ENCODE measurements at regions of chr3 and their contacts with region 1.

Region 1: GRCh38 chr3:57826245-57826951 is 70.3 kb downstream of the SLMAP start:
- DNase-seq: no peak
- ATAC-seq: no peak
- H3K4me3 ChIP-seq: no peak overlapping the region
- H3K27ac ChIP-seq: no peak overlapping the region
- H3K4me1 ChIP-seq: peaks cover 0 to 58% (median 21%) of the 10 kb centered on the region in 12 donors
- H3K27me3 ChIP-seq: no peaks in the 10 kb centered on the region
- CTCF ChIP-seq: peak in 7 of 12 donors; percentile 19 to 54 (median 42)
- POLR2A ChIP-seq: no peak

Region 2: GRCh38 chr3:57397175-57398026 is 429.0 kb before region 1 on chr3:
- intact Hi-C with region 1: loop called in 1 of 10 experiments (anchors 10 kb)
- DNase-seq: peak in 3 of 5 donors; percentile 18 to 29 (median 23)
- ATAC-seq: peak in 3 of 4 donors; percentile 66 to 85 (median 75)
- H3K4me3 ChIP-seq: no peak overlapping the region
- H3K27ac ChIP-seq: no peak overlapping the region
- H3K4me1 ChIP-seq: peaks cover 0 to 4% (median 0%) of the 10 kb centered on the region in 12 donors
- H3K27me3 ChIP-seq: no peaks in the 10 kb centered on the region
- CTCF ChIP-seq: peak; percentile 58 to 79 (median 73)
- POLR2A ChIP-seq: no peak

Region 3: GRCh38 chr3:57646723-57647122 is 179.7 kb before region 1 on chr3:
- intact Hi-C with region 1: loop called in 5 of 10 experiments (anchors 5 to 10 kb)
- DNase-seq: peak in 2 of 5 donors; percentile 22 to 35
- ATAC-seq: peak; percentile 86 to 92 (median 89)
- H3K4me3 ChIP-seq: no peak overlapping the region
- H3K27ac ChIP-seq: peak overlapping the region in 2 of 12 donors; percentile 25 to 34
- H3K4me1 ChIP-seq: peaks cover 0 to 12% (median 6%) of the 10 kb centered on the region in 12 donors
- H3K27me3 ChIP-seq: no peaks in the 10 kb centered on the region
- CTCF ChIP-seq: peak in 8 of 12 donors; percentile 24 to 60 (median 41)
- POLR2A ChIP-seq: no peak

Region 4: DNA sequence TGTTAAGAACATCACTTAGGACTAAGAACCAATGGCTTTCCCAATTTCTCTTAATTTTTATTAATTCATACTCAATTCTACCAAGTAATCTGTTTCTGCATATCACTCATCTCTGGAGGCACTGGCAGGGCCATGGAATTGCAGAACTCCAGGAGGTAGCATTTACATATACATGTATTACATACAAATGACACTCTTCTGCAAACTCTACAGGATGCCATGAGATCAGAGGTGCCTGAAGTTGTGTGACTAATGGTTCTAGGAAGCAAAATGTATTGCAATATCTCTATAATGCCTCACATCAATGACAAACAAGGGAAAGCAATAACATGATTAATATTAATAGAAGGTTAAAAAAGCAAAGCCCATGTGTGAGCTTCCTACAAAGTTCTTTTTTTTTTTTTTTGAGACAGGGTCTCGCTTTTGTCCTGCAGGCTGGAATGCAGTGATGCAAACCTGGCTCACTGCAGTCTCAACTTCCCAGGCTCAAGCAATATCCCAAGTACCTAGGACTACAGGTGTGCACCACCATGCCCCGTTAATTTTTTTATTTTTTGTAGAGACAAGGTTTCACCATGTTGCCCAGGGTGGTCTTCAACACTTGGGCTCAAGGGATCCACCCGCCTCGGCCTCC is 166.5 kb before region 1 on chr3:
- intact Hi-C with region 1: loop called in 1 of 10 experiments (anchors 10 kb)
- DNase-seq: no peak
- ATAC-seq: no peak
- H3K4me3 ChIP-seq: no peak overlapping the region
- H3K27ac ChIP-seq: peak overlapping the region in 7 of 12 donors; percentile 25 to 63 (median 46)
- H3K4me1 ChIP-seq: peaks cover 0 to 19% (median 15%) of the 10 kb centered on the region in 12 donors
- H3K27me3 ChIP-seq: no peaks in the 10 kb centered on the region
- CTCF ChIP-seq: no peak
- POLR2A ChIP-seq: no peak

Region 5: GRCh38 chr3:57682284-57682683 is 144.1 kb before region 1 on chr3:
- intact Hi-C with region 1: loop called in 2 of 10 experiments (anchors 10 kb)
- DNase-seq: no peak
- ATAC-seq: no peak
- H3K4me3 ChIP-seq: no peak overlapping the region
- H3K27ac ChIP-seq: no peak overlapping the region
- H3K4me1 ChIP-seq: peaks cover 0 to 45% (median 26%) of the 10 kb centered on the region in 12 donors
- H3K27me3 ChIP-seq: no peaks in the 10 kb centered on the region
- CTCF ChIP-seq: no peak
- POLR2A ChIP-seq: no peak

Region 6: GRCh38 chr3:57692259-57693147 is 133.9 kb before region 1 on chr3 and contains the start of gene DENND6A:
- intact Hi-C with region 1: loop called in 3 of 10 experiments (anchors 10 kb)
- DNase-seq: peak; percentile 88 to 99 (median 91)
- ATAC-seq: peak; percentile 91 to 97 (median 96)
- H3K4me3 ChIP-seq: peak within 1 kb of the TSS; percentile 50 to 97 (median 87)
- H3K27ac ChIP-seq: peak within 1 kb of the TSS; percentile 85 to 100 (median 99)
- H3K4me1 ChIP-seq: peaks cover 0 to 53% (median 33%) of the 10 kb centered on the region in 12 donors
- H3K27me3 ChIP-seq: no peaks in the 10 kb centered on the region
- CTCF ChIP-seq: peak in 2 of 12 donors; percentile 6 to 19
- POLR2A ChIP-seq: peak; percentile 70 to 95
- total RNA-seq, gene DENND6A: 12.3 to 27.9 (median 18.6) TPM

Region 7: DNA sequence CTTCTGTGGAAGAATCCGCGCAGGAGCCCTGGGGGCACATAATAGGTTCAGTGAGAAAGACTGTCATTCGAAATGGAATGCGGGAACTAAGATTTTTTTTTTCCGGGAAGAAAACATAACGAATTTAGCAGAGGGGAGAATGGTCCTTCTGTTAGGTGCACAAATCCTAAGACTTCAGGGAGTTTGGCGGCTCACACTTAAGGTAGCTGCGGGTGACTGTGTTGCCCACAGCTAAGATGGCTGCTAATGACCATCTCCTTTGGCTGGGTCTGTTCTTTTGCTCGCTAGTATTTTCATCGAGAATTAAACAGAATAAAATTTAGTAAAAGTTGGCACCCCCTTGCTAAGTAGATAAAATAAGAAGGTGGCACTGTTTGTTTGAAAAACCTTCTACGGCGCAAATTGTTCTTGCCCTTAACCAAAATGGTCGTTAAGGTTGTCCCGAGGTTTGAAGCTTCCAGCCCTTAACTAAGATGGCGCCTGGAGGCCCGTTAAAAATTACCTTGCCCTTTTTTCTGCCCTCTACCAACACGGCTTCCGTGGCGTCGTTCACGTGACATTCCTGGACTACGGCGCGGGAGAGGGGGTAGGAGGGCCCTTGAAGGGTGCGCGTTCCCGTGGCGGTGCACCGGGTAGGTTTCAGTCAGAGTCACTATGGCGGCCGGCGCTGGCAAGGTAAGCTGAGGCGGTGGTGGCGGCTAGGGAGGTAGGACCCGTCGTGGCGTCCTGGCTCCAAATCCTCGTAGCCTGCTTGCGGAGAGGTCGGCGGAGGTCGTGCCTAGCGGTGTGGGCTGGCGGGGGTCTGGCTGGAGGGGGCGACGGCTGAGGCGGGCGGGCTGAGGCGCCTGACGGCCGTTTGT is 70.5 kb before region 1 on chr3 and contains the start of gene SLMAP:
- intact Hi-C with region 1: loop called in 3 of 10 experiments (anchors 5 to 10 kb)
- DNase-seq: peak; percentile 97 to 98 (median 98)
- ATAC-seq: peak; percentile 98 to 99 (median 99)
- H3K4me3 ChIP-seq: peak within 1 kb of the TSS; percentile 79 to 98 (median 93)
- H3K27ac ChIP-seq: peak within 1 kb of the TSS; percentile 80 to 93 (median 90)
- H3K4me1 ChIP-seq: peaks cover 0 to 45% (median 25%) of the 10 kb centered on the region in 12 donors
- H3K27me3 ChIP-seq: no peaks in the 10 kb centered on the region
- CTCF ChIP-seq: no peak
- POLR2A ChIP-seq: peak in 1 of 2 donors; percentile 61
- total RNA-seq, gene SLMAP: 163 to 534 (median 290) TPM

Region 8: DNA sequence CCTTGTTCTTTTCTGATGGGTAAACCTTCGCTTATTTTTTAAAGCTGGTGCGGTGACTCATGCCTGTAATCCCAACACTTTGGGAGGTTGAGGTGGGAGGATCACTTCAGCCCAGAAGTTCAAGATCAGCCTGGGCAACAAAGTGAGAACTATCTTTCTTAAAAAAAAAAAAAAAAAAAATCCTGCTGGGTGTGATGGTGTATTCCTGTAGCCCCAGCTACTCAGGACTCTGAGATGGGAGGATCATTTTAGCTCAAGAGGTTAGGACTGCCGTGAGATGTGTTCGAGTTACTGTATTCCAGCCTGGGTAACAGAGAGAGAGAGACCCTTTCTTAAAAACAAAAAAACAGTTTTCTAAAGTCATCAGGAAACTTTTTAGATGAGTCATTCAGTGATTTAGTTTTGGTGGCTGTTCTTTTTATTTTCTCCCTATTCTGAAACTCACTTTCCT is 32.6 kb before region 1 on chr3:
- intact Hi-C with region 1: no loop called
- DNase-seq: no peak
- ATAC-seq: peak in 1 of 4 donors; percentile 10
- H3K4me3 ChIP-seq: no peak overlapping the region
- H3K27ac ChIP-seq: no peak overlapping the region
- H3K4me1 ChIP-seq: peaks cover 0 to 42% (median 18%) of the 10 kb centered on the region in 12 donors
- H3K27me3 ChIP-seq: no peaks in the 10 kb centered on the region
- CTCF ChIP-seq: no peak
- POLR2A ChIP-seq: no peak

Region 9: GRCh38 chr3:57910988-57911387 is 84.6 kb after region 1 on chr3:
- intact Hi-C with region 1: no loop called
- DNase-seq: no peak
- ATAC-seq: peak in 2 of 4 donors; percentile 23 to 43
- H3K4me3 ChIP-seq: no peak overlapping the region
- H3K27ac ChIP-seq: peak overlapping the region in 1 of 12 donors; percentile 65
- H3K4me1 ChIP-seq: peaks cover 0 to 4% (median 0%) of the 10 kb centered on the region in 12 donors
- H3K27me3 ChIP-seq: no peaks in the 10 kb centered on the region
- CTCF ChIP-seq: peak in 7 of 12 donors; percentile 6 to 45 (median 31)
- POLR2A ChIP-seq: no peak

Region 10: DNA sequence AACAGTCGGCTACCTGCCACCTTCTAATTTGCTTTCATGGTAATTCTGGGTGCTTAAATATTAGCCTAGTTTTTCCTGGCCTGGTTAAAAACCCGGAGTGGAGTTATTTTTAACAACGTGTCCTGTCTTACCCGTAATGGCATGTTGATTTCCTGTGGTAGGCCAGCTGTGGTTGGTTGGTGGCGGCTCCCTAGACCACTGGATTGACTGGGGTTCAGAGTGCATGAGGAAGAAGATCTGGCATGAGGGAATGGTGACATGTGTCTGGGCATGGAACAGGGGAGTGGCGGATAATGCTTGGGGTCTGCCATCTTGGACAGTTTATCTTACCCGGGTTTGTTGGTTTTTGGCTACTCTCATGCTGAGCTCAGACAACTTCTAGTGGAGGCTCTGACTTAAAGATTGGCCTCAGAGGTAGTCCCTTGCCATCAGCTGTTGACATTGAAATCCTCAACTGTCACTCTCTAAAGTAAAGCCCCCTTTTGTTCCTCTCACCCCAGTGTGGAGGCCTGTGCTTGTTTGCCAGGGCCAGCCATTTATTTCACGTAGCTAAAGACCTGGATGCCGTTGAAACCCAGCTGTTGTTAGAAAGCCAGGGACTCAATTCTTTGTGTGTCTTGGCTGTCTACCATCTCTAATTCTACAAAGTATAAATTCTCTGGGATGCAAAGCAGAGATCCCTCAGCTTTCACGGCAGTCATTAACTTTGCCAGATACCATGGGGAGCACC is 302.8 kb after region 1 on chr3:
- intact Hi-C with region 1: no loop called
- DNase-seq: no peak
- ATAC-seq: no peak
- H3K4me3 ChIP-seq: no peak overlapping the region
- H3K27ac ChIP-seq: peak overlapping the region in 1 of 12 donors; percentile 27
- H3K4me1 ChIP-seq: peaks cover 0 to 3% (median 0%) of the 10 kb centered on the region in 12 donors
- H3K27me3 ChIP-seq: no peaks in the 10 kb centered on the region
- CTCF ChIP-seq: no peak
- POLR2A ChIP-seq: no peak